ENCODE measurements at regions of chr6 and their contacts with region 1.

Region 1: GRCh38 chr6:46203391-46204177 is 32.8 kb upstream of the ENPP5 start:
- DNase-seq: no peak
- ATAC-seq: no peak
- H3K4me3 ChIP-seq: no peak overlapping the region
- H3K27ac ChIP-seq: no peak overlapping the region
- H3K4me1 ChIP-seq: peaks cover 2% of the 10 kb centered on the region
- H3K27me3 ChIP-seq: no peaks in the 10 kb centered on the region

Region 2: GRCh38 chr6:45930420-45931040 is 273.1 kb before region 1 on chr6:
- intact Hi-C with region 1: loop called in 1 of 4 experiments (anchors 10 kb)
- DNase-seq: peak; percentile 66 to 83 (median 82)
- ATAC-seq: peak; percentile 77 to 78
- H3K4me3 ChIP-seq: no peak overlapping the region
- H3K27ac ChIP-seq: no peak overlapping the region
- H3K4me1 ChIP-seq: no peaks in the 10 kb centered on the region
- H3K27me3 ChIP-seq: no peaks in the 10 kb centered on the region

Region 3: DNA sequence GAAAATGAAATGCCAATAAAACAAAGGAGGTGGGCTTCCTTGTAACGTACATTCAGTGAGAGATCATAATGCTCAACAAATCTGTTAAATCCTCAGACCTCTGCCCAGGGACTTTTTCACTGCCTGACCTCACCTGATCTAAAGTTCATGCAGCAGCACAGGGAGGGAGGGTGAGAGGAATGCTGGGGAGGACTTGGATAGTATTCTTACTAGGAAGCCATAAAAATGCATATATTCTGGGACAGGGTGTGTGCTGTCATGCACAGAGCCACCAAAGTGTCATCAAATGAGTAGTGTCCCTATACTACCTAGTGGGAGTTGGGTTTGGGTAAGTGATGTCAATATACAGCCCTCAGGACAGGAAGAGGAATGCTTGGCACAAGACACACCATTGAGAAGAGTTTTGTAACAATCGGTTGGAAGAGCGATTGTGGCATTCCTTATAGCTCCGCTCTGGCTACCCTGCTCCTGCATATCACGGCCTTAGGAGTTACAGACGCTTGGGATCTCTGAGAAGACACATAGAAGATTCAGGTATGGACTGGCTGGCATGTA is 220.4 kb before region 1 on chr6:
- intact Hi-C with region 1: no loop called
- DNase-seq: no peak
- ATAC-seq: no peak
- H3K4me3 ChIP-seq: no peak overlapping the region
- H3K27ac ChIP-seq: no peak overlapping the region
- H3K4me1 ChIP-seq: peaks cover 4% of the 10 kb centered on the region
- H3K27me3 ChIP-seq: no peaks in the 10 kb centered on the region

Region 4: GRCh38 chr6:46090115-46091079 is 113.2 kb before region 1 on chr6:
- intact Hi-C with region 1: loop called in 2 of 4 experiments (anchors 5 to 10 kb)
- DNase-seq: peak; percentile 50 to 74 (median 61)
- ATAC-seq: peak; percentile 51 to 68
- H3K4me3 ChIP-seq: no peak overlapping the region
- H3K27ac ChIP-seq: no peak overlapping the region
- H3K4me1 ChIP-seq: no peaks in the 10 kb centered on the region
- H3K27me3 ChIP-seq: no peaks in the 10 kb centered on the region

Region 5: DNA sequence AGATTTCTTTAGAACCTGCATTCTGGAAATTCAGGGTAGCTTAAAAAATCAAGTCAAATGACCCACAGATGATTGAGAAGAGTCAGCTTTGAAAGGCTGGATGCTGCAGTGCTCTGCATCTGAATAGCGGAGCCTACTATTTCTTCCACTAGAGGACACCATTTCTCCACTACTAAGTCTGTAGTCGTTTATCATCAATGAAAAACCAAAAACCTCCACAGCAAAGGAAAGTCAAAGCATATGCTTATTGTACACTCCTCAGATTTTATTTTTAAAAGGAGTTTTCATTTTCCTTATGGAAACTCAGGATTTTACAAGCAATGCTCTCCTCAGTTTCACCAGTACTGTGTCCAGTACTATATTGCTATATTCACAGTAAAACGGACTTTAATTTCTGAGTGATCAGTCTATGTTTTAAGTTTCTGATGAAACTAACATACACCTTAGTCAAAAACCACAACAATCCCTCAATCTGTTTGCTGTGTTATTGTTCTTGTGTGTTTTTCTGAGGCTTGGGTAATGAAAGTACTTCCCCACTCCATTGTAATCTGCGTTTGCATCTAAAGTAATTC is 17.7 kb after region 1 on chr6:
- intact Hi-C with region 1: no loop called
- DNase-seq: no peak
- ATAC-seq: peak; percentile 53 to 59
- H3K4me3 ChIP-seq: no peak overlapping the region
- H3K27ac ChIP-seq: no peak overlapping the region
- H3K4me1 ChIP-seq: peaks cover 6% of the 10 kb centered on the region
- H3K27me3 ChIP-seq: no peaks in the 10 kb centered on the region